Natural killer cell (primary cell): ENCODE measurements at regions of chr2 and their contacts with region 1.

Region 1: DNA sequence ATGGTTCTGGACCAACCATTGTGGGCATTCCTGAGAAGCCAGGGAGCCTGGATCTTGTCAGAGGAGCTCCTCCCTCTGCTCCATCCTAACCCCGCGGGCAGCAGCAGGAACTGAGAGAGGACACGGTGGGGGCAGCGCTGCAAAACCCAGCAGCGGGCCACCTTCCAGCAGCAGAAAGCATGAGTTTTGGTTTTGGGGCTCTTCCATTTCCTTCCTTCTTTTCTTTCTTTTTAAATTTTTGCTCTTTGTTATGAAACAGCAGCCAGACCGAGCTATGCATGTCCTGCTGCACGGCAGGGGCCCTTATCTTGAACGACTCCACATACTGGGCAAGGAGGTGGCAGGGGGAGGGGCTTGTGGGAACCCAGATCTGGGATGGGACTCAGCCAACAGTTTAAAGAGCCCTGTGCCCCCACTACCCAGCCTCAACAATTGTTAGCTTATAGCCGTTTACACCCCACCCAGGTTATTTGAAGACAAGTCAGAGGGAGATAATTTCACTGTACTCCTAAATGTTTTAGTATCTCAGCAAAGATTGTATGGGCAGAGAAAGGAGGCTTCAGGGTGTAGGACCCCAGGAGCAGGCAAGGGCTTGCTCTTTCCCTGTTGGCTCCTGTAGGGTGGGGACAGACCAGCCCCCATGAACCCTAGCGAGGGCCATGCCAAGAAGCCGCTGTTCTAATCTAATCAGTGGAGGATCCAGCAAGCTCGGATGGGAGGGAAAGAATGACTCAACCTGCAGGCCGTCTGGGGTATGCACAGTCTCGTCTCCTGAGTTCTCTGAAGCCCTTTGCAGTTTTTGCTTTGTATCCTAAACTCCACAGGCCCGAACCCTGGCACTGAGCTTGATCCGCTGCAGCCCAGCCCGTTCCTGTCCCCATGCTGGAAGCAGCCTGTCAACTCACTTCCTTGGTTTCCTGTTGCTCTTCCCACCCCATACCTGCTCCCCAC is 75.3 kb downstream of the LRRFIP1 start:
- DNase-seq: peak in 1 of 2 donors; percentile 50
- ATAC-seq: peak in 2 of 3 donors; percentile 8 to 24
- H3K4me3 ChIP-seq: peak overlapping the region; percentile 2
- H3K4me3 Mint-ChIP-seq: peak overlapping the region; percentile 70
- H3K27ac ChIP-seq: peak overlapping the region; percentile 8
- H3K27ac Mint-ChIP-seq: peak overlapping the region; percentile 86 to 99
- H3K4me1 ChIP-seq: peaks cover 95% of the 10 kb centered on the region
- H3K4me1 Mint-ChIP-seq: peaks cover 82 to 94% of the 10 kb centered on the region in 2 donors
- H3K27me3 ChIP-seq: no peaks in the 10 kb centered on the region
- H3K27me3 Mint-ChIP-seq: no peaks in the 10 kb centered on the region
- CTCF ChIP-seq: no peak

Region 2: DNA sequence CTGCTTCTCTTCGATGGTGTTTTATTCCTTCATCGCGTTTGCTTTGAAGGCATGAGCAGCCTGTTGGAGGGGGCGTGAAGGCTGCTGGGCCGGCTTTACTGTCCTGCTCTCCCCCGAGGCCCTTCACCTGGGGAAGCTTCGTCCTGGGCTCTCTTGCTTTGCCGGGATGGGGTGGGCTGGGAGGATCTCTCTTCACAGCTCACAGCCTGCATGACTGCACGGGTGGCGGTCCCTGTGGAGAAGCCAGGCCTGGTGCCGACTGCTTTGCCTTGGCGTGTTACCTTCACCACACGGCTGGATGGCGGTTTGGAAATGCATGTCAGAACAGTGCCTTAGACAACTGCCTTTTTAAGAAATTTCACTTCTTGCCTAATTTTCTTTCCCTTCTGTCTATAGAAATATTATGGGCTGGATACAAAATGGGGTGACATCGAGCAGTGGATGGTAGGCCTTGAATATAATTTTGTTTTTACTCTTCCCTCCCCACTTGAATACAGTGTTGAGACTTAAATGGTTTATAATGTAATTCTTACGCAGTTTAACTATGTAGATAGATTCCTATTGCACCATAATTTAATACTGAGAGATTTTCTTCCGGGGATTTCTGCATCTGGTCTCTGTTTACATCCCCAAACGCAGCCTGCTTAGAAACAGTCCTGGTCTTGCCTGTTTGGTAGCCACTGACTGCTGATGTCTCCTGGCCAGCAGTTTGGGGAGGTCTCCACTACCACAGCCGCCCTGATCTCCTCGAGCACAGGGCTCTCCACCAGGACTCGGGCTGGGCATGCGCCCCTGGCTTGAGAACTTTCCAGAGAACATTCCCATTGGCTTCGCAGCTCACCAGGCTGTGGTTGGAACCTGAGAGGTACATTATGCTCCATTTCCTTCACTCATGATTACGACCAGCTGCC is 14.9 kb after region 1 on chr2:
- intact Hi-C with region 1: loop called (anchors 2 kb)
- DNase-seq: no peak
- ATAC-seq: no peak
- H3K4me3 ChIP-seq: no peak overlapping the region
- H3K4me3 Mint-ChIP-seq: no peak overlapping the region
- H3K27ac ChIP-seq: no peak overlapping the region
- H3K27ac Mint-ChIP-seq: peak overlapping the region; percentile 74 to 77
- H3K4me1 ChIP-seq: peaks cover 3% of the 10 kb centered on the region
- H3K4me1 Mint-ChIP-seq: peaks cover 69 to 78% of the 10 kb centered on the region in 2 donors
- H3K27me3 ChIP-seq: no peaks in the 10 kb centered on the region
- H3K27me3 Mint-ChIP-seq: no peaks in the 10 kb centered on the region
- CTCF ChIP-seq: no peak